B cell (primary cell): ENCODE measurements at regions of chr7 and their contacts with region 1.

Region 1: GRCh38 chr7:101138213-101138870 is 11.4 kb downstream of the SERPINE1 start:
- DNase-seq: peak; percentile 62
- ATAC-seq: peak; percentile 86
- H3K4me3 ChIP-seq: no peak overlapping the region
- H3K4me3 Mint-ChIP-seq: peak overlapping the region; percentile 74
- H3K27ac ChIP-seq: no peak overlapping the region
- H3K27ac Mint-ChIP-seq: peak overlapping the region; percentile 77
- H3K4me1 ChIP-seq: peaks cover 0 to 7% of the 10 kb centered on the region in 2 donors
- H3K4me1 Mint-ChIP-seq: peaks cover 13% of the 10 kb centered on the region
- H3K27me3 ChIP-seq: peaks cover 0 to 12% (median 5%) of the 10 kb centered on the region in 4 experiments
- H3K27me3 Mint-ChIP-seq: peaks cover 31% of the 10 kb centered on the region
- CTCF ChIP-seq: peak; percentile 72

Region 2: DNA sequence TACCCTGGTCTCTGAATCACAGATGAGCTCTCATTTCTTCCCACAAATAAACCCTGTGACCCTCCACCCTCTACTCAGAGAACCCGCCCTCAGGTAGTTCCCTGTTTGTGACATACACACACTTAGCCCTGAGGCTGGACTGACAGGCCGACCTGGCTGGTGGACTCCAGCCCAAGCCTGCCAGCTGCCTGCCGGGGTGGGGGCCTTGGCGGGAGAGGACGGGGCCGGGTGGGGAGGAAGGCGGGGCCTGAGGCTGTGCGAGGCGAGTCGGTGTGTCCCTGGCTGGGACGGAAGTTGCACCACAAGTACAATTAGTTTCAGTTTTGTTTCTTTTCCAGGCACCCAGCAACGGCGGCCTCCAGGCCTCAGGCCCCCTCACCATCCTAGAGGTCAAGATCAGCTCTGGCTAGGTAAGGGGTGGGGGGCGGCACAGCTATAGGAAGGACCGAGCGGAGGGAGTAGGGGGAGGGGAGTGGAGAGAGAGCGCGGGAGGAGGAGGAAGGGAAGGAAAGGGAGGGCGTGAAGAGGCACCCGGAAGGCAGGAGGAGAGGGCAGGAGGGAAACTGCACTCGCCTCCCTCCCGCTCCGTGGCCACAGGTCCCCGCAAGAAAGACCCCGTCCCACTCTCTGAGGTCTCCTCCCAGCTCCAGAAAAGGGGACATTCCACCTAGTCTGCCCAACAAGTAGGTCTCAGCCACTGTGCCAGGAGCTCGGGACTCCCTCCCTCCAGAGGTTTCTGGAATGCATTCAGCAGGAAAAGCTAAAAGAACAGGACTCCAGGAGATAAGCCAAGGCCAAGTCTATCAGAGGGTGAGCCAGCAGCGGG is 53.0 kb before region 1 on chr7 and contains the start of gene TRIM56:
- CTCF ChIA-PET with region 1: interaction called, 3 read pairs
- POLR2A ChIA-PET with region 1: no interaction called
- intact Hi-C with region 1: loop called (anchors 2 kb)
- DNase-seq: peak; percentile 83
- ATAC-seq: peak; percentile 97
- H3K4me3 ChIP-seq: peak within 1 kb of the TSS; percentile 88 to 98 (median 92)
- H3K4me3 Mint-ChIP-seq: peak within 1 kb of the TSS; percentile 98
- H3K27ac ChIP-seq: peak within 1 kb of the TSS; percentile 86 to 96
- H3K27ac Mint-ChIP-seq: peak within 1 kb of the TSS; percentile 98
- H3K4me1 ChIP-seq: peaks cover 16 to 29% of the 10 kb centered on the region in 2 donors
- H3K4me1 Mint-ChIP-seq: peaks cover 22% of the 10 kb centered on the region
- H3K27me3 ChIP-seq: no peaks in the 10 kb centered on the region
- H3K27me3 Mint-ChIP-seq: peaks cover 3% of the 10 kb centered on the region
- CTCF ChIP-seq: no peak
- total RNA-seq, gene TRIM56: 76.1 and 85.7 TPM in 2 replicates

Region 3: DNA sequence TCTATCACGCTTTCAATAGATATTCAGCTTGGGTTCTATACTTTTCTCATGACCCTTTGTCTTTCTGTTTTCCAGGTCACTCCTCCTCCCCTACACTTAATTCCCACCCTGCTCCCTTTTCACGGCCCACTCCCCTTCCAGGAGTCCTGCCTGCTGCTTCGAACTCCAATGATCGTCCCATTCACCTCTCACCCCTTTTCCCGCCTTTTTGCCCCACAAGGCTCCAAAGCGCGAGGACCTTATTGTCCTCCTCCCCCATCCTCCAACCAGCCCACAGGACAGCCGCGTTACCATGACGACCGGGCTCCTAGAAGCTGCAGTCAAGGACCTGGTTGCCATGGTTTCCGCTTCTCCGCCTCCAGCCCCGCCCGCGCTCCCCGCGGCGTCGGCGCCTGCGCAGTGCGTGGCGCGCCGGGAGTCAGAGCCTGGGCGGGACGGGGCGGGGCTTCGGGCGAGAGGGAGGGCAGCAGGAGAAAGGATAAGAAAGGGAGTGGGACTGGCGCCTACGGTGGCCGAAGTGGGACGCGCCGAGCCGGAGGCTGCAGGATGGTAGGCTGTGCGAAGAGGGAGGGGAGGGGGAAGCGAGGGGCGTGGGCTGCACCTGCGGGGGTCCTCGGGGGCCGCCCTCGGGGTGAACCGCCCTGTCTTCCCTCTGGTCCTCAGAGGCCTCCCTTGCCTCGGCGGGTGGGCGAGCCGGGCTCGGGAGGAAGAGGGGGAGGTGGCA is 15.8 kb after region 1 on chr7 and contains the start of gene AP1S1:
- CTCF ChIA-PET with region 1: interaction called, 68 read pairs
- POLR2A ChIA-PET with region 1: no interaction called
- intact Hi-C with region 1: no loop called
- DNase-seq: peak; percentile 95
- ATAC-seq: peak; percentile 90
- H3K4me3 ChIP-seq: peak within 1 kb of the TSS in 4 of 5 experiments; percentile 53 to 71 (median 63)
- H3K4me3 Mint-ChIP-seq: peak within 1 kb of the TSS; percentile 86
- H3K27ac ChIP-seq: no peak within 1 kb of the TSS
- H3K27ac Mint-ChIP-seq: peak within 1 kb of the TSS; percentile 67
- H3K4me1 ChIP-seq: peaks cover 10 to 16% of the 10 kb centered on the region in 2 donors
- H3K4me1 Mint-ChIP-seq: peaks cover 12% of the 10 kb centered on the region
- H3K27me3 ChIP-seq: no peaks in the 10 kb centered on the region
- H3K27me3 Mint-ChIP-seq: peaks cover 9% of the 10 kb centered on the region
- CTCF ChIP-seq: no peak
- total RNA-seq, gene AP1S1: 10.3 and 11.4 TPM in 2 replicates

Region 4: GRCh38 chr7:101186844-101187428 is 48.6 kb after region 1 on chr7:
- CTCF ChIA-PET with region 1: interaction called, 129 read pairs
- POLR2A ChIA-PET with region 1: interaction called, 5 read pairs
- intact Hi-C with region 1: loop called (anchors 1 kb)
- DNase-seq: no peak
- ATAC-seq: no peak
- H3K4me3 ChIP-seq: no peak overlapping the region
- H3K4me3 Mint-ChIP-seq: no peak overlapping the region
- H3K27ac ChIP-seq: no peak overlapping the region
- H3K27ac Mint-ChIP-seq: no peak overlapping the region
- H3K4me1 ChIP-seq: no peaks in the 10 kb centered on the region
- H3K4me1 Mint-ChIP-seq: peaks cover 4% of the 10 kb centered on the region
- H3K27me3 ChIP-seq: peaks cover 0 to 16% (median 5%) of the 10 kb centered on the region in 4 experiments
- H3K27me3 Mint-ChIP-seq: peaks cover 26% of the 10 kb centered on the region
- CTCF ChIP-seq: no peak

Region 5: DNA sequence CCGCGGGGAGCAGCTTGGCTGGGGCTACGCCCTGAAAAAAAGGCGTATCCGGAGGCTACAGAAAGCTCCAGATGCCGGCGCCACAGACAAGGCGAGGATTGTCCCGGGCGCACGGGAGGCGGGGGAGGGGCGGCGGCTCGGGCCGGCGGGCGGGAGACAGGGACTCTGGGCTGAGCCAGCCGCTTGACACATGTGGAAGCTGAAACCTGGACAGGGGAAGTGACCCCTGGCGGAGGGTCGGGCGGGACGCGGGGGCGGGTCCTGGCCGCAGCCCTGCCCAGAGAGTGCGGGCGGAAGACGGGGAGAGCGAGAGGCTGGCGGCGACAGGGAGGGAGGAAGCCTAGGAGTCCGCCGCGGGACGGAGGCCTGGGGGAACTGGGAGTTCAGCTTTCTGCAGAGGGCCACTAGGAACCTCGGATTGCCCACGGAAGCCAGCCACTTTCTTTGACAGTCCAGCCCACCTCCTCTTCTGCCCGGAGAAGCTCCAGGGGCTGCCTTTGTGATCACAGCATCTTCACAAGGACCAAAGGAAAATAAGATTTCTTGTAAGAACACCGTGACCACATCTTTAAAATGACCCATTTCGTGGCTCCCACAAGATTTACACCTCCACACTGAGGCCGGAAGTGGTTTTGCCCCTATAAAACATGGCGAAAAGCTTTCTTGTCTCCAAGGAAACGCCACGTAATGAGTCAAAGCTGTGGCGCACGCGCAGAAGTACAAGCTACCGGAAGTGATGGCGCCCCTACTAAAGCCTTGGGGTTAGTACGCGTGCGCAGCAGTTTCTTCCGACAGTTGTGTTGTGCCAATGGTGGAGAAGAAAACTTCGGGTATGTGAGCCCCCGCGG is 79.3 kb after region 1 on chr7 and contains the starts of genes PLOD3 and ZNHIT1:
- CTCF ChIA-PET with region 1: interaction called, 12 read pairs
- POLR2A ChIA-PET with region 1: interaction called, 3 read pairs
- intact Hi-C with region 1: no loop called
- DNase-seq: peak; percentile 98
- ATAC-seq: peak; percentile 80
- H3K4me3 ChIP-seq: peak within 1 kb of the TSS; percentile 85 to 99 (median 94)
- H3K4me3 Mint-ChIP-seq: peak within 1 kb of the TSS; percentile 97
- H3K27ac ChIP-seq: peak within 1 kb of the TSS; percentile 44 to 75
- H3K27ac Mint-ChIP-seq: peak within 1 kb of the TSS; percentile 95
- H3K4me1 ChIP-seq: peaks cover 18 to 21% of the 10 kb centered on the region in 2 donors
- H3K4me1 Mint-ChIP-seq: peaks cover 25% of the 10 kb centered on the region
- H3K27me3 ChIP-seq: no peaks in the 10 kb centered on the region
- H3K27me3 Mint-ChIP-seq: no peaks in the 10 kb centered on the region
- CTCF ChIP-seq: peak; percentile 6
- total RNA-seq, gene PLOD3: 47.5 and 47.9 TPM in 2 replicates
- total RNA-seq, gene ZNHIT1: 37.3 and 38.4 TPM in 2 replicates

Region 6: DNA sequence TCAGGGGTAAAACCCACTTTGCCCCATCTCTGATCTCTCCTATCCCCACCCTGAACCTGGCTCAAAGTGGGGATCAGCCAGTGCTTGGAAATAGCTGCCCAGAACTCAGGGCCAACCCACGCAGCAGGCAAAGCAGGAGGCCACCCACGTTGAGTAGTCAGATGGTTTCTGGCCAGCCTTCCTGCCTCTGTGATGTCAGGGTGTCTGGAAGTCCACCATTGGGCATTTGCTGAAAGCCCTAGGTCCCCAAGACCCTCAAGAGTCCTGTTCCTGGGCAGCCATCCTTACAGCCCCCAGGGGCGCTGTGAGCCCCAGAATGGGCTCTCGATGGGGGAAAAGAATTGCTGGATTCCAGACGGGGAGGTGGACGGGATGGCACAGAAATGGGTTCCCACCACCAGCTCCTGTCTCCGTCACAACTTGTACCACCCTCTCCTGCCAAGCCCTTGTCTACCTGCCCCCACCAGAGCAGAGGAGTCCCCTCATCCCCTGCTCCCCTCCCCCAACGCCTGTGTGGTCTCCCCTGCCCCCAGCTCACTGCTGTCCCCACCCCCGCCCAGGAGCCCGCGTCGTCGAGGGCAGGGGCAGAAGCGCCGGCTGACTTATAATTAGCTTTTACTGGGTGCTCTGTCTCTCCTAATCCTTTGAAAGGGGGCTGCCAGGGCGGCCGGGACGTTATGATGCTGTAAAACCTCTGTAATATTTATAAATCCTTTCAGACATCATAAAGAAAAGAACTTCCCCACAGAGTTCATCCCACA is 486.9 kb after region 1 on chr7:
- CTCF ChIA-PET with region 1: no interaction called
- POLR2A ChIA-PET with region 1: no interaction called
- intact Hi-C with region 1: no loop called
- DNase-seq: no peak
- ATAC-seq: no peak
- H3K4me3 ChIP-seq: no peak overlapping the region
- H3K4me3 Mint-ChIP-seq: no peak overlapping the region
- H3K27ac ChIP-seq: no peak overlapping the region
- H3K27ac Mint-ChIP-seq: no peak overlapping the region
- H3K4me1 ChIP-seq: no peaks in the 10 kb centered on the region
- H3K4me1 Mint-ChIP-seq: no peaks in the 10 kb centered on the region
- H3K27me3 ChIP-seq: peaks cover 0 to 12% (median 3%) of the 10 kb centered on the region in 4 experiments
- H3K27me3 Mint-ChIP-seq: peaks cover 22% of the 10 kb centered on the region
- CTCF ChIP-seq: no peak

Region 7: DNA sequence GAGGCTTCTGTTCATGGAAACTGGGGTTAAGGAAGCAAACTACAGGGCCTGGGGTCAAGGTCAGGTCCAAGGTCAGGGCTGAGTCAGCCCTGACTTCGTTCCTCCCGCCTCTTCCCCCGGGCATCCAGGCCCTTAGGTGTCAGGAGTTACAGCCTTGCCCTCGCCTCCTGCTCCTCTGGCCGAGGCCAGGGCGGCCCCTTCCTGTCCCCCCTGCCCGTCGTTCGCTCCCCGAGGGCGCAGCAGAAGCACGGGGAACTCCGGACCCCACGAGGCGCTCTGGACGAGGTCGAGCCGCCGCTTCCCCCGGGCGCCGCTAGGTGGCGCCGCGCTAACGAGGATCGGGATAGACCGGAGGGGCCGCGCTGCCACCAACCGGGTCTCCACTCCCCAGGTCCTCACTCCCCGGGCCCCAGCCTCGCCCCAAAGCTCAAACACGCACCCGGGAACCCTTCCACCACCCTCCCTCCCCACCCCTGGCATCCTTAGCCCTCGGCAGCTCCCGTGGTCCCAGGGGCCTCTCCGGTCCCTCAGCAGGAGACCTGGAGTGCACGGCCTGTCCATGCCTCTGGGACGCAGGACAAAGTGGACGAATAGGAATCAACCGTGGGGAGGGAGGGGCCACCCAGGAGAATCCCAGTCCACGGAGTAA is 550.0 kb after region 1 on chr7:
- CTCF ChIA-PET with region 1: no interaction called
- POLR2A ChIA-PET with region 1: no interaction called
- intact Hi-C with region 1: no loop called
- DNase-seq: peak; percentile 87
- ATAC-seq: peak; percentile 91
- H3K4me3 ChIP-seq: peak overlapping the region in 1 of 5 experiments; percentile 15
- H3K4me3 Mint-ChIP-seq: no peak overlapping the region
- H3K27ac ChIP-seq: no peak overlapping the region
- H3K27ac Mint-ChIP-seq: no peak overlapping the region
- H3K4me1 ChIP-seq: peaks cover 3 to 7% of the 10 kb centered on the region in 2 donors
- H3K4me1 Mint-ChIP-seq: peaks cover 2% of the 10 kb centered on the region
- H3K27me3 ChIP-seq: peaks cover 0 to 12% (median 1%) of the 10 kb centered on the region in 4 experiments
- H3K27me3 Mint-ChIP-seq: peaks cover 5% of the 10 kb centered on the region
- CTCF ChIP-seq: peak; percentile 93